Activated T-helper 1 cell treated with anti-CD3 and anti-CD28 coated beads, Interleukin-12 subunit alpha, Interleukin-12 subunit beta, Interleukin-2, Interleukin-4 antibody, amounts not matched to agents 30 ng/mL and 10 ng/mL and 1 ng/mL, durations not matched to agents 14 hours and 24 hours and 36 hours (primary cell): ENCODE measurements at regions of chr19 and their contacts with region 1.

Region 1: DNA sequence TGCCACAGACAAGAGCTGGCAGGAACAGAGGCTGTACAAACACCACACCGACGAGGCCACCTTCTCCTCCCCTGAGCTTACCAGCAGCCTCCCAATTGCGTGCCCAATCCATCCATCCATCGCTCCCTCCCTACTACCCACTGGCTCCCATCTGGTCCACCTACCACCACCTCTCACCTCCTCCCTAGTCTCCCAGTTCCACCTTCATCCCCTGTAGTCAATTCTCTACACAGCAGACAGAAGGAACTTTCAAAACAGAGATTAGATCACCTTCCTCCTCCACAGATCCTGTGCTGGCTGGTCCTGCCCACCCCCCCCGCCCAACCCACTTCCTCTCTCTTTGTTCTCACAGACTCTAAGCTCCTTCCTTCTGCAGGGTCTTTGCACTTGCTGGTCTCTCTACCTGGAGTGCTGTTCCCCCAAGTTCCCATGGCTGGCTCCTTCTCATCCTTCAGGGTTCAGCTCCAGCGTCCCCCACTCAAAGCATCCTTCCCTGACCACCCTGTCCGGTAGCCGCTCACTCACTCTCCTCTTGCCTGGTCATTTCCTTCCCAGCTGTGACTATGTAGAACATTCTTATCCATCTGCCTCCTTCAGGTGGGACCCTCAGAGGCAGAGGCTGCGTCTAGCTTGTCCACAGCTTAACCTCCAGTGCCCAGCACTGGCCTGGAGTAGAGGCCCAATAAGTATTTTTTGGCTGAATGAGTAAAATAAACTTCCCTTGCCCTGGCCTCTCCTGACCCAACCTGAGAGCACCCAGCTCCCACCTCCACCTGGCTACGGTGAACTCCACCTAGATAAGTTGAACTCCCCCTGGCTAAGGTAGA is 23.0 kb downstream of the PIN1 start:
- DNase-seq: no peak
- H3K4me3 Mint-ChIP-seq: peak overlapping the region; percentile 79
- H3K27ac Mint-ChIP-seq: peak overlapping the region; percentile 93
- H3K4me1 Mint-ChIP-seq: peaks cover 62% of the 10 kb centered on the region
- H3K27me3 Mint-ChIP-seq: no peaks in the 10 kb centered on the region

Region 2: DNA sequence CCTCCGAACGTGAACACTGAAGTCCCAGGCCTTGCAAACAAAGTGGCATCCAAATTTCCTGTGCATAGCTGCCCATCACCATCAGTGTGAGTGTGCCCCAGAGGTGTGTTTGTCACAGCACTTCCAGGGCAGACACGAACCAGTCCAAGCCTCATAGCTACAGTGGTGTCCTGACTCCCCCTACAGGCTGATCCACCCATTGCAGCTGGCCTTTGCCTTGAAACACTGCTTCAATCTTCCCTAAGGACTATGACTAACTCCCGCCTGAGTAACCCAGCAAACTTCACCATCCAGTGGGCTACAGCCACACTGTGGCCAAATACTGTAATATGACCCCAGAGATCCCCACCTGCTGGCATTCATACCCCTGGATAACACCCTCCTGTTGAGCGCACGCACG is 426.7 kb before region 1 on chr19:
- intact Hi-C with region 1: no loop called
- DNase-seq: no peak
- H3K4me3 Mint-ChIP-seq: no peak overlapping the region
- H3K27ac Mint-ChIP-seq: no peak overlapping the region
- H3K4me1 Mint-ChIP-seq: peaks cover 27% of the 10 kb centered on the region
- H3K27me3 Mint-ChIP-seq: no peaks in the 10 kb centered on the region

Region 3: DNA sequence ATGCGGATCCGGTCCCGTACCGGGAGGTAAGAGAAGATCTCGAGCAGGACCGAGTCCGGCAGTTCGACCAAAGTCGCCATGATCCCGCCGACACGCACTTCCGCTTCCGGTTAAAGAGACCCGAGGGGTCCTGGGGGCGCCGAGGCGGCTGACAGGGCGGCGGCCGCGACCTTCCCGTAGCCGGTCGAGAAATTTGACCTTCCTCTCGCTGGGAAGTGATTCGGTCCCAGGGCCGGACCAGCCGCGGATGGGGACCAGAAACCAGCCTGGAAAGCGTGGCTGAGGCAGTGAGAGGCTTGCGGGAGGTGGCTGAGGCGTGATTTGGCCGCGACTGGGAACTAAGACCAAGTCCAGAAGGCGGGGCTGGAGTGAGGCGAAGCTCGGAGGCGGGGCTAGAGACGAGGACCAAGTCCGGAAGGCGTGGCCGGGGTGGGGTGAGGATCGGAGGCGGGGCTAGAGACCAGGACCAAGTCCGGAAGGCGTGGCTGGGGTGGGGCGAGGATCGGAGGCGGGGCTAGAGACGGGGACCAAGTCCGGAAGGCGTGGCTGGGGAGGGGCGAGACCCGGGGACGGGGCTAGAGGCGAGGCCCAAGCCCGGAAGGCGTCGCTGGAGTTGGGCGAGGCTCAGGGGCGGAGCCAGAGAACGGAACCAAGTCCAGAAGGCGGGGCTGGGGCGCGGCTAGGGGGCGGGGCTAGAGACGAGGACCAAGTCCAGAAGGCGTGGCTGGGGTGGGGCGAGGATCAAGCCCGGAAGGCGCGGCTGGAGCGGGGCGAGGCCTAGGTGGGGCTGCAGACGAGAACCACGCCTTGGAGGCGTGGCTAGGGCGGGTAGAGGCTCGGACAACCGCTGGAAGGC is 39.2 kb before region 1 on chr19 and contains the start of gene FBXL12:
- intact Hi-C with region 1: no loop called
- DNase-seq: peak; percentile 100
- H3K4me3 Mint-ChIP-seq: peak within 1 kb of the TSS; percentile 90
- H3K27ac Mint-ChIP-seq: peak within 1 kb of the TSS; percentile 87
- H3K4me1 Mint-ChIP-seq: peaks cover 27% of the 10 kb centered on the region
- H3K27me3 Mint-ChIP-seq: no peaks in the 10 kb centered on the region
- total RNA-seq, gene FBXL12: 19.4 and 20.7 TPM in 2 replicates

Region 4: DNA sequence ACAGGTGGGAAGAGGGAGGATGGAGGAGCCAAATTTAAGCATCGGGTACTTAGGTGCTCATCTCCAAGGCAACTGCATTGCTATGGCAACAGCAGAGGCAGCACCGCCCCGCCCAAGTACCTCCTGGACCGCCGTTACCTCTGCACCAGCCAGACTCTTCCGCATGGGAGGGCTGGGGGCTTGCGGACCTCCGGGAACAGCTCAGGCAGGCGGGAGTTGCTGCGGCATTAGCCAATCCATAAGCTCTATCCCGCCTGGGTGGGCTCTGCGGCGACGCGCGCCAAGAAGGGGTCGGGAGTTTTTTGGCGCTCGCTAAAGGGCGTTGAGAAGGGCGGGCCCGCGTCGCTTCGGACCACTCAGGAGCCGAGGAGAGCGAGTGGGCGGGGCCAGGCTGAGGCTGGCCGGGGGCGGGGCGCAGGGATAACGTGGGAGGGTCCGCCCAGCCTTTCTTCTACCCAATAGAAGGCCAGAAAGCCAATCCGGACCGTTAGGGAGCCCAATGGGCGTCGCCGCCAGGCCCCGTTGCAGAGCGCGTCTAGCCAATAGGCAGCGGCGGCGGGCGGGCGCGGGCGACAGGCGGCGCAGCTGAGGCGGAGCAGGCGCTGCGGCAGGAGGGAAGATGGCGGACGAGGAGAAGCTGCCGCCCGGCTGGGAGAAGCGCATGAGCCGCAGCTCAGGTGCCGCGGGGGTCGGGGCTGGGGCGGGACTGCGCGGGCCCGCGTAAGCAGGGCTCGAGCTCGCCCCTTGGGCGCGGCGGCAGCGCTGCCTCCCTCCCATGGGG is 23.2 kb before region 1 on chr19 and contains the start of gene PIN1:
- intact Hi-C with region 1: loop called (anchors 1 kb)
- DNase-seq: peak; percentile 99
- H3K4me3 Mint-ChIP-seq: peak within 1 kb of the TSS; percentile 97
- H3K27ac Mint-ChIP-seq: peak within 1 kb of the TSS; percentile 90
- H3K4me1 Mint-ChIP-seq: peaks cover 10% of the 10 kb centered on the region
- H3K27me3 Mint-ChIP-seq: no peaks in the 10 kb centered on the region
- total RNA-seq, gene PIN1: 86.4 and 87.3 TPM in 2 replicates

Region 5: DNA sequence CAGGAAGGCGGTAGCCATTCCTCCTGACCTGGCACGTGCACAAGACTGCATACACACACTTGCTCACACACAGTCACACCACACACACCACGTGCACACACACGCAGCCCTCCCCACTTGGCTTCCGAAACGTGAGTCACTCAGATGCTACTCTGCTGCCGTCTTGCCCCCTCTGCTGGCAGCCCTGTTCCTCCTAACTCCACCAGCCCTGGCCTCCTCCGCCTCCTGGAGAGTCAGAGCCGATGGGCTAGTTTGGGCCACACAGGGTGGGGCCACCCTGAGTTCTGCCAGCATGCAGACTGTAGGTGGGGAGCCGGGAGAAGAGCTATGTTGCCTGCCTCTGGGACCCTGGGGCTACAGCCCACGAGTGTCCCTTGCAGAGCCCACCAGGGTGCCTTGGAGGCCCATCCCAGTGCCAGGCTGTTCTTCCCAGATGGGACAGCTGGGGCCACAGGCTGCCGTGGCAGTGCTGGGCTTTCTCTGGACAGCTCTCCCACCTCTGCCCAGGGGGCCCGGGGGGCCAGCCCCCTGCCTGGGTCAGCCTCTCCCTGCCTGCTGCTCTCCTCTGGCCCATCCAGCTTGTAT is 11.0 kb before region 1 on chr19:
- intact Hi-C with region 1: loop called (anchors 2 kb)
- DNase-seq: no peak
- H3K4me3 Mint-ChIP-seq: no peak overlapping the region
- H3K27ac Mint-ChIP-seq: no peak overlapping the region
- H3K4me1 Mint-ChIP-seq: peaks cover 6% of the 10 kb centered on the region
- H3K27me3 Mint-ChIP-seq: no peaks in the 10 kb centered on the region

Region 6: GRCh38 chr19:9903336-9903735 is 45.2 kb after region 1 on chr19:
- intact Hi-C with region 1: no loop called
- DNase-seq: no peak
- H3K4me3 Mint-ChIP-seq: no peak overlapping the region
- H3K27ac Mint-ChIP-seq: no peak overlapping the region
- H3K4me1 Mint-ChIP-seq: no peaks in the 10 kb centered on the region
- H3K27me3 Mint-ChIP-seq: peaks cover 8% of the 10 kb centered on the region

Region 7: GRCh38 chr19:9914315-9915207 is 56.4 kb after region 1 on chr19:
- intact Hi-C with region 1: loop called (anchors 2 kb)
- DNase-seq: peak; percentile 69
- H3K4me3 Mint-ChIP-seq: peak overlapping the region; percentile 52
- H3K27ac Mint-ChIP-seq: no peak overlapping the region
- H3K4me1 Mint-ChIP-seq: peaks cover 17% of the 10 kb centered on the region
- H3K27me3 Mint-ChIP-seq: peaks cover 21% of the 10 kb centered on the region